Brain microvascular endothelial cell (primary cell): ENCODE measurements at regions of chr7 and their contacts with region 1.

Region 1: DNA sequence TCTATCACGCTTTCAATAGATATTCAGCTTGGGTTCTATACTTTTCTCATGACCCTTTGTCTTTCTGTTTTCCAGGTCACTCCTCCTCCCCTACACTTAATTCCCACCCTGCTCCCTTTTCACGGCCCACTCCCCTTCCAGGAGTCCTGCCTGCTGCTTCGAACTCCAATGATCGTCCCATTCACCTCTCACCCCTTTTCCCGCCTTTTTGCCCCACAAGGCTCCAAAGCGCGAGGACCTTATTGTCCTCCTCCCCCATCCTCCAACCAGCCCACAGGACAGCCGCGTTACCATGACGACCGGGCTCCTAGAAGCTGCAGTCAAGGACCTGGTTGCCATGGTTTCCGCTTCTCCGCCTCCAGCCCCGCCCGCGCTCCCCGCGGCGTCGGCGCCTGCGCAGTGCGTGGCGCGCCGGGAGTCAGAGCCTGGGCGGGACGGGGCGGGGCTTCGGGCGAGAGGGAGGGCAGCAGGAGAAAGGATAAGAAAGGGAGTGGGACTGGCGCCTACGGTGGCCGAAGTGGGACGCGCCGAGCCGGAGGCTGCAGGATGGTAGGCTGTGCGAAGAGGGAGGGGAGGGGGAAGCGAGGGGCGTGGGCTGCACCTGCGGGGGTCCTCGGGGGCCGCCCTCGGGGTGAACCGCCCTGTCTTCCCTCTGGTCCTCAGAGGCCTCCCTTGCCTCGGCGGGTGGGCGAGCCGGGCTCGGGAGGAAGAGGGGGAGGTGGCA is at the start of gene AP1S1:
- DNase-seq: peak; percentile 90
- H3K4me3 ChIP-seq: peak within 1 kb of the TSS; percentile 74
- H3K27ac ChIP-seq: no peak within 1 kb of the TSS
- H3K27me3 ChIP-seq: no peaks in the 10 kb centered on the region
- CTCF ChIP-seq: no peak

Region 2: GRCh38 chr7:101299511-101300464 is 145.7 kb after region 1 on chr7:
- in situ Hi-C with region 1: loop called (anchors 25 kb)
- DNase-seq: no peak
- H3K4me3 ChIP-seq: no peak overlapping the region
- H3K27ac ChIP-seq: no peak overlapping the region
- H3K27me3 ChIP-seq: peaks cover 55% of the 10 kb centered on the region
- CTCF ChIP-seq: no peak